Heart right ventricle (tissue), 16 donors: ENCODE measurements at regions of chr10 and their contacts with region 1.

Region 1: DNA sequence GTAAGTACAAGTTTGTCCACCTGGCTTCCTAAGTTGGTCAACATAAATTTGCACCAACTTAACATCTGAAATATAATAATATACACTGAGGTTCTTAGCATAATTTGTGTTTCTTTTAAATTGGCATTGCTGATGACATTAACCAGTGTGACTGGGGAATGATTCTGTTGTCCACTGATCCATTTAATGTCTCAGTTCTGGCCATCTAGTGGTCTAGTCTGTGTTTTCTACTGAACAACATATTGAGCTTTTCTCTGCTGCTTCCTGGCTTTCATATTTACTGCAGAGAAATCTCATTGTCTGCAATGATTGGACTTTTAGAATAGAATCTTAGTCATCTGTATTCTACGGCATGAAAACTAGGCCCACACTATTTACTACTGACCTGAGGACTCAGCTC is 455.7 kb downstream of the NRG3 start:
- DNase-seq: no peak
- ATAC-seq: no peak
- H3K4me3 ChIP-seq: no peak overlapping the region
- H3K27ac ChIP-seq: no peak overlapping the region
- H3K4me1 ChIP-seq: no peaks in the 10 kb centered on the region
- H3K27me3 ChIP-seq: no peaks in the 10 kb centered on the region
- CTCF ChIP-seq: no peak

Region 2: DNA sequence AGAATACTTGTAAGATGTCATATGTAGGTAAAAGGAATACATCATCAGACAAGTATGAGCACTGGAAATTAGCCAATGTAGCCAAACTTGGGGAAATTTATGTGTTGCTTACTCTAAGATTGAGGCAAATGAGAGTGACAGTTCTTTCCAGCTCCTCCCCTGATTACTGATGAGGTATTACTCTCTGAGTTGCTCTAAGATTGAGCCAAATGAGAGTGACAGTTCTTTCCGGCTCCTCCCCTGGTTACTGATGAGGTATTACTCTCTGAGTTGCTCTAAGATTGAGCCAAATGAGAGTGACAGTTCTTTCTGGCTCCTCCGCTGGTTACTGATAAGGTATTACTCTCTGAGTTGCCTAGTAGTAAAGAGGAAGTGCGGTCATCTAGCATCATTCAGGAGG is 19.9 kb before region 1 on chr10:
- intact Hi-C with region 1: loop called in 1 of 10 experiments (anchors 1 kb)
- DNase-seq: no peak
- ATAC-seq: no peak
- H3K4me3 ChIP-seq: no peak overlapping the region
- H3K27ac ChIP-seq: no peak overlapping the region
- H3K4me1 ChIP-seq: no peaks in the 10 kb centered on the region
- H3K27me3 ChIP-seq: no peaks in the 10 kb centered on the region
- CTCF ChIP-seq: no peak